OCI-LY7 (cell line): ENCODE measurements at regions of chr2 and their contacts with region 1.

Region 1: DNA sequence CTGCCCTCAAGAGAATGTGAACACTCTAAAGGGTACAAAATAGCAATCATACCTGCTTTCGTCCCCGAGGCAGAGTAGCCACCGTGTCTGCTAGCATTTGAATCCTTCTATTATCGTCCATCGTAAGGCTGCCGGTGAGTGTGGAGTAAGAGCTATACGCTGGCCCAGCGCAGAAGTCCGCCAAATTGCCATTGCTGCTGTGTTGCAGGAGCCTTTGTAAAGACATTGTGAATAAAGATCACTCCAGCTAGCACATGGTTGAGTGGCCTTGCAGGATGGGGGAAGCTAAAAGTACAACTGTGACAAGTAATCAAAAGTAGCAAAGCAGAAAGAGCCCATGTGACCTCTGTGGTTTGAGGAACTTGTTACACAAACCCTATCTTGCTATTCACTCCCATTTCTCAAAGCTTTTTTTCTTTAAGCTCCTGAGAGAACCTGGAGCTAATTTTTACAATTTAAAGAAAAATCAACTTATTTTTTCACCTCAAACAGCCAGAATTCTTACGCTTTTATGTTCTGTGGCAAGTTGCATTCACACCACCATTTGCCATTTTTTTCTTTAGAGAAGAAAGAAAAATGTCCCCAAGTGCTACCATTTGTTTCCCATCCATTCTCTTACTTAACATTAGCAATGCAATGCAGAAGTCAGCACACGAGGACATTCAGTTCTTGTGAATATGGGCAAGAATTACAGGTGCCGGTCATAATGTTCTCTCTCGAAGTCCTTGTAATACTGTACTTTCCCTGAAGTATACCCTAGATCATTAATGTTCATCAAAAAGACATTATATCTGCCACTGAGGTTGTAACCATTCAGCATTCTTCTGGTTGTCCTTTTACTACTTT is at the start of gene CYTIP:
- DNase-seq: peak; percentile 84
- H3K4me3 ChIP-seq: peak within 1 kb of the TSS; percentile 78
- H3K27ac ChIP-seq: peak within 1 kb of the TSS; percentile 87
- H3K4me1 ChIP-seq: peaks cover 44% of the 10 kb centered on the region
- CTCF ChIP-seq: no peak
- total RNA-seq, gene CYTIP: 49.2 and 53.0 TPM in 2 replicates

Region 2: DNA sequence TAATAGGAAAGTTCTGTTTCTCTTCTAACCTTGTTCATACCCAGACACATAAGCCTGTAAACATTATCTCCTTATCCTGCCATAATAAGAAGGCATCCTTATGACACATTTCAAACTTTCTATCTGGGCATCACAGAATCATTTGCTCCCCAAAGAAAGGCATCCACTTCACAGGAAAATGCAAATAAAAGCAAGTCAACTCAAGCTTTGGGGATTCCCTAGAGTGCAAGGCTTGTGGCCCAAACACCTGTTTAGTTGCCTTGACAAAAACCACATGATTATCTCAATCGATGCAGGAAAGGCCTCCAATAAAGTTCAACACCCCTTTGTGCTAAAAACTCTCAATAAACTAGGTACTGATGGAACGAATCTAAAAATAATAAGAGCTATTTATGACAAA is 382.2 kb before region 1 on chr2:
- CTCF ChIA-PET with region 1: no interaction called
- POLR2A ChIA-PET with region 1: no interaction called
- intact Hi-C with region 1: no loop called
- DNase-seq: no peak
- H3K4me3 ChIP-seq: no peak overlapping the region
- H3K27ac ChIP-seq: no peak overlapping the region
- H3K4me1 ChIP-seq: no peaks in the 10 kb centered on the region
- CTCF ChIP-seq: no peak

Region 3: GRCh38 chr2:157404363-157404762 is 39.7 kb before region 1 on chr2:
- CTCF ChIA-PET with region 1: interaction called, 6 read pairs
- POLR2A ChIA-PET with region 1: interaction called, 22 read pairs
- intact Hi-C with region 1: loop called (anchors 1 kb)
- DNase-seq: peak; percentile 93
- H3K4me3 ChIP-seq: peak overlapping the region; percentile 44
- H3K27ac ChIP-seq: peak overlapping the region; percentile 92
- H3K4me1 ChIP-seq: peaks cover 40% of the 10 kb centered on the region
- CTCF ChIP-seq: no peak

Region 4: GRCh38 chr2:157420771-157421323 is 23.2 kb before region 1 on chr2:
- CTCF ChIA-PET with region 1: interaction called, 3 read pairs
- POLR2A ChIA-PET with region 1: interaction called, 14 read pairs
- intact Hi-C with region 1: no loop called
- DNase-seq: no peak
- H3K4me3 ChIP-seq: no peak overlapping the region
- H3K27ac ChIP-seq: no peak overlapping the region
- H3K4me1 ChIP-seq: no peaks in the 10 kb centered on the region
- CTCF ChIP-seq: no peak

Region 5: GRCh38 chr2:157433394-157433793 is 10.6 kb before region 1 on chr2:
- CTCF ChIA-PET with region 1: no interaction called
- POLR2A ChIA-PET with region 1: interaction called, 13 read pairs
- intact Hi-C with region 1: no loop called
- DNase-seq: no peak
- H3K4me3 ChIP-seq: no peak overlapping the region
- H3K27ac ChIP-seq: no peak overlapping the region
- H3K4me1 ChIP-seq: peaks cover 55% of the 10 kb centered on the region
- CTCF ChIP-seq: no peak

Region 6: GRCh38 chr2:157460384-157460837 is 16.4 kb after region 1 on chr2:
- CTCF ChIA-PET with region 1: no interaction called
- POLR2A ChIA-PET with region 1: interaction called, 42 read pairs
- intact Hi-C with region 1: no loop called
- DNase-seq: no peak
- H3K4me3 ChIP-seq: no peak overlapping the region
- H3K27ac ChIP-seq: no peak overlapping the region
- H3K4me1 ChIP-seq: no peaks in the 10 kb centered on the region
- CTCF ChIP-seq: no peak

Region 7: GRCh38 chr2:157468931-157469708 is 25.1 kb after region 1 on chr2:
- CTCF ChIA-PET with region 1: interaction called, 4 read pairs
- POLR2A ChIA-PET with region 1: interaction called, 42 read pairs
- intact Hi-C with region 1: loop called (anchors 1 kb)
- DNase-seq: peak; percentile 90
- H3K4me3 ChIP-seq: peak overlapping the region; percentile 64
- H3K27ac ChIP-seq: peak overlapping the region; percentile 96
- H3K4me1 ChIP-seq: peaks cover 53% of the 10 kb centered on the region
- CTCF ChIP-seq: no peak

Region 8: GRCh38 chr2:158456309-158457066 is 1012.5 kb after region 1 on chr2 and contains the starts of genes CCDC148 and PKP4:
- CTCF ChIA-PET with region 1: no interaction called
- POLR2A ChIA-PET with region 1: no interaction called
- intact Hi-C with region 1: loop called (anchors 5 kb)
- DNase-seq: peak; percentile 92
- H3K4me3 ChIP-seq: peak within 1 kb of the TSS; percentile 80
- H3K27ac ChIP-seq: peak within 1 kb of the TSS; percentile 30
- H3K4me1 ChIP-seq: peaks cover 26% of the 10 kb centered on the region
- CTCF ChIP-seq: no peak
- total RNA-seq, gene CCDC148: 0.19 and 1.1 TPM in 2 replicates
- total RNA-seq, gene PKP4: 58.5 and 68.7 TPM in 2 replicates